Heart left ventricle (tissue), 16 donors: ENCODE measurements at regions of chr14 and their contacts with region 1.

Region 1: GRCh38 chr14:59301354-59301753 is 112.9 kb downstream of the DAAM1 start:
- DNase-seq: peak in 1 of 5 donors; percentile 43
- ATAC-seq: peak in 3 of 4 donors; percentile 42 to 62 (median 54)
- H3K4me3 ChIP-seq: no peak overlapping the region
- H3K27ac ChIP-seq: no peak overlapping the region
- H3K4me1 ChIP-seq: peaks cover 3 to 83% (median 47%) of the 10 kb centered on the region in 12 donors
- H3K27me3 ChIP-seq: no peaks in the 10 kb centered on the region
- CTCF ChIP-seq: no peak
- POLR2A ChIP-seq: no peak

Region 2: DNA sequence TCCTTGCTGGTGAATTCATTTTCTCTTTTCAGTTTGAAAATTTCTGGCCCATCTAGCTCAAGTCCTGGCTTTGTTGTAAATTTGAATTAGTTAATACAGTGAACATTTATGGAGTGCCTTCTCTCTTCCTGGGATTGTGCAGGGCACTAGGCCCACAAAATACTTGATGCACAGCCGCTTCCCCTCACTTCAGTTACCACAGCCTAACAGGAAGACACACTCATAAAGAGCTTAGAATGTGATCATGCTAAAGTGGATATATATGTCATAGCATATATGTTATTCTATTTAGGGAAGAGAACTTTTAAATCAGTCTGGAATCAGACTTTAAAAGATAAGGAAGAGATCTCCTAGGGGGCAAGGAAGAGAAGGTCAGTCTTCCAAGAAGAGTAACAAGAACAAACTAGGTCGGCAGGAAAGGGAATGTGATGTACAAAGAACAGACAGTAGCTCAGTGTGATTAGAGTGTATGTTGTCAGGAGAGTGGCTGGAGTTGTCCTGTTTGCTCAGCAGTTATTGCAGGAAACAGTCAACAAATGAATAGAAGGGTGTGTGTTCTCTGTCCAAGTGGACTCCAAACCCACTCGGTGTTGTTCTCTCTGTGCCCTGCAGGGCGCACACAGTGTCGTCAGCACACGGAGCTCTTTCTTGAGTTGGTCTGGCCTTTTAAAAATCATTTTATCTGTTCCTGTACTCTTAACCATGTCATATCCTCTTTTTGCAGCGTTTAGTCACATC is 38.5 kb before region 1 on chr14:
- intact Hi-C with region 1: loop called in 1 of 10 experiments (anchors 5 kb)
- DNase-seq: no peak
- ATAC-seq: peak; percentile 61 to 76 (median 67)
- H3K4me3 ChIP-seq: no peak overlapping the region
- H3K27ac ChIP-seq: peak overlapping the region in 2 of 12 donors; percentile 8 to 13
- H3K4me1 ChIP-seq: peaks cover 0 to 40% (median 15%) of the 10 kb centered on the region in 12 donors
- H3K27me3 ChIP-seq: no peaks in the 10 kb centered on the region
- CTCF ChIP-seq: peak in 9 of 12 donors; percentile 10 to 54 (median 30)
- POLR2A ChIP-seq: no peak

Region 3: DNA sequence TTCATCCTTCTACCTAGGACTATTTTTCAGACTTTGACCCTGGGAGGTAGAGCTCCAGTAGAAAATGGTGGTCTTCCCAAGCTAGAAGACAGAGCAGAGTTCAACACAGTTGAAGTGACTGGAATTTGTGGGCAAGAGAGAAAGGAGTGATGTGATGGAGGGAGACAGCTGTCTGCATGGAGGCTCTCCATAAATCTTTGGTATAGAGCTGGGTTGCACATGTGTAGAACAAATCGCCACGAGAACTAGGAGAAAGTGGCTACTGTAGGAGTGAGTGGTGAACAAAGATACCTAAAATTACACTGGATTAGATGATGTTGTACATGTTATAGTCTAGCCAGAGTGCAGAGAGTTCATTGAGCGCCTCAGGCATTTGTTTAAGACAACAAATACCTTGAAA is 149.4 kb after region 1 on chr14:
- intact Hi-C with region 1: no loop called
- DNase-seq: no peak
- ATAC-seq: no peak
- H3K4me3 ChIP-seq: no peak overlapping the region
- H3K27ac ChIP-seq: no peak overlapping the region
- H3K4me1 ChIP-seq: peaks cover 0 to 5% (median 0%) of the 10 kb centered on the region in 12 donors
- H3K27me3 ChIP-seq: no peaks in the 10 kb centered on the region
- CTCF ChIP-seq: no peak
- POLR2A ChIP-seq: no peak